Endothelial cell of umbilical vein (primary cell): ENCODE measurements at regions of chr1 and their contacts with region 1.

Region 1: DNA sequence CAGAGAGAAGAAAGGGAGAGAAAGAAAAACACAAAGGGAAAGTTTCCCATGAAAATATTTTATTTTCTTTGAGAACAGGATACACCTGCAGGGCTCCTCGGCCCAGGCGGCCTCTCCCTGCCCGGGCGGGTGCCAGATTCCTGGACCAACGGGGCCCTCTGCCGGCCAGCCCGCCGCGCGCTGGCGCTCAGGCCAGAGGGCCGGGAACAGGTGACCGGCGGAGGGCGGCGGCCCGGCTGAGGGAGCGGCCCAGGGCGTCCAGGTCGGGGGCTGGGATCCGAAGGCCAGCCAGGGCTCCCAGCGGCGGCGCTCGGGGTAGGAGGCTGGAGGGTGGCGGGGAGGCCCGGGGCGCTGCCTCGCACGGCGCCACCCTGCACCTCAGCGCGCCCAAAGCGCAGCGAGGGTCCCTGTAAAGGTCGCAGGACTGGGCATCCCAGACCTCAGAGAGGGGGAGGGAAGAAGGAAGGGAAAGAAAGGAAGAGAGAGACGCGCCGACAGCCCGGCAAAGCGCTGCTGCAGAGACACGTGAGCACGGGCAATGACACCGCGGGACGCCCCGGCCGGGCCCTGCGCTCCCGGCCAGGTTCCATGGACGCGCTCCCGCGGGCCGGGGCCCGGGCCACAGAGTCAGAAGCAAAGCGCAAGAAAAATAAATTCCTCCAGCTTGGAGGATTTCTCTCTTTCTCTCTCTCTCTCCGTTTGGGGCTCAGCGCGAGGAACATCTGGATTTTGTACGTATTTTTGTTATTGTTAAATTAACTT is 927 bp downstream of the WNT9A start:
- DNase-seq: no peak
- H3K4me3 ChIP-seq: peak overlapping the region in 2 of 3 experiments; percentile 44 to 63
- H3K27ac ChIP-seq: no peak overlapping the region
- H3K4me1 ChIP-seq: peaks cover 16% of the 10 kb centered on the region
- H3K27me3 ChIP-seq: peaks cover 3 to 5% of the 10 kb centered on the region in 2 experiments
- CTCF ChIP-seq: peak; percentile 68 to 73
- POLR2A ChIP-seq: no peak

Region 2: DNA sequence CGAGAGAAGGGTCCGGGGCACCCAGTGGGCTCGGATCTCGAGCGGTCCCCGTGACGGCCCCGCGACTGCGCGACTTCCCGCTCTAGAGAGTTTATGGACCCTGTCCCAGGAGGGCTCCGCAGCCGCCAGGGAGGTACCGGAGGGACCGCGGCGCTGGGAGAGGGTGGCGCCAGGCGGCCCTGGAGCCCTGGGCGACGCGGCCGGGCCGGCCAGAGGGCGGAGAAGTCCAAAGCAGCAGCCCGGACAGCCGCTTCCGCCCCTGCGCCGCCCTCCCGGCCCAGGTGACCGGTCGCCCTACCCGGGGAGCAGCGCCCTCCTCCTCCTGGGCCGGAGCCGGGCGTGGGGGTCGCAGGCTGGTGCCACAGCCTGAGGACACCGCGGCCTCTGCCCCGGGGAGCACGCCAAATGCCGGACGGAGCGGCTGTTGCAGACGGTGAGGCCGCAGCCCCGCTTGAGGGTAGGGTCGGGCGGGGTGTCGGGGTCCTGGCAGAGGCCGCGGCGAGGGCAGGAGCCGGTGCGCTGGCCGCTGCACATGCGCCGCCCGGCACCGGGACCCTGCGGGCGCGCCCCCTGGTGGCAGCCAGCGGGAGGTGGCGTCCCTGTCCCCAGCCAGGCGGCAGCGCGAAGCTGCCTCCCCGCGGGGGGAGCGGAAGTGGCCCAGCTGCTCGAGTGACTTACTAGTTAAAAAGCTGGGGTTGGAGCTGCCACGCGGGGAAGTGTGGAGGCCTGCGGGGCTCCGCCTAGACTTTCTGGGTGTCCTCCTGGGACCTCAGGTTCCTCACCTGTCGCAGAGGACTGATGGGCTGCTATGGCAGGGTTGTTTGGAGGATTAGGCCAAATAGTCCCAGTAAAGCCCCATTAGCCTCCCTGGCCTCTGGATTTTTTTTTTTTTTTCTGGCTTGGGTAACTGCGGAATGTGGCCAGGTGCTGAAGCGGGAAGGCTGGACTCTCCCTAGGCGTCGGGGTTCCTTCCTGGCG is 404.4 kb before region 1 on chr1:
- CTCF ChIA-PET with region 1: interaction called, 6 read pairs
- POLR2A ChIA-PET with region 1: no interaction called
- dilution Hi-C with region 1: no loop called
- intact Hi-C with region 1: loop called (anchors 1 kb)
- DNase-seq: peak; percentile 70
- H3K4me3 ChIP-seq: peak overlapping the region; percentile 2 to 64 (median 23)
- H3K27ac ChIP-seq: no peak overlapping the region
- H3K4me1 ChIP-seq: peaks cover 8% of the 10 kb centered on the region
- H3K27me3 ChIP-seq: no peaks in the 10 kb centered on the region
- CTCF ChIP-seq: peak; percentile 87 to 96
- POLR2A ChIP-seq: no peak

Region 3: GRCh38 chr1:227728059-227728891 is 218.5 kb before region 1 on chr1:
- CTCF ChIA-PET with region 1: interaction called, 8 read pairs
- POLR2A ChIA-PET with region 1: no interaction called
- dilution Hi-C with region 1: no loop called
- intact Hi-C with region 1: loop called (anchors 1 kb)
- DNase-seq: peak; percentile 44
- H3K4me3 ChIP-seq: peak overlapping the region in 1 of 3 experiments; percentile 30
- H3K27ac ChIP-seq: no peak overlapping the region
- H3K4me1 ChIP-seq: peaks cover 2% of the 10 kb centered on the region
- H3K27me3 ChIP-seq: peaks cover 0 to 10% of the 10 kb centered on the region in 2 experiments
- CTCF ChIP-seq: no peak
- POLR2A ChIP-seq: no peak

Region 4: GRCh38 chr1:227762233-227762911 is 184.4 kb before region 1 on chr1:
- CTCF ChIA-PET with region 1: interaction called, 16 read pairs
- POLR2A ChIA-PET with region 1: no interaction called
- dilution Hi-C with region 1: no loop called
- intact Hi-C with region 1: loop called (anchors 1 kb)
- DNase-seq: peak; percentile 76
- H3K4me3 ChIP-seq: no peak overlapping the region
- H3K27ac ChIP-seq: no peak overlapping the region
- H3K4me1 ChIP-seq: peaks cover 8% of the 10 kb centered on the region
- H3K27me3 ChIP-seq: no peaks in the 10 kb centered on the region
- CTCF ChIP-seq: peak; percentile 77 to 89
- POLR2A ChIP-seq: no peak

Region 5: GRCh38 chr1:227886993-227887696 is 59.7 kb before region 1 on chr1:
- CTCF ChIA-PET with region 1: no interaction called
- POLR2A ChIA-PET with region 1: no interaction called
- dilution Hi-C with region 1: no loop called
- intact Hi-C with region 1: loop called (anchors 5 kb)
- DNase-seq: peak; percentile 41
- H3K4me3 ChIP-seq: peak overlapping the region in 1 of 3 experiments; percentile 31
- H3K27ac ChIP-seq: no peak overlapping the region
- H3K4me1 ChIP-seq: no peaks in the 10 kb centered on the region
- H3K27me3 ChIP-seq: no peaks in the 10 kb centered on the region
- CTCF ChIP-seq: no peak
- POLR2A ChIP-seq: no peak

Region 6: DNA sequence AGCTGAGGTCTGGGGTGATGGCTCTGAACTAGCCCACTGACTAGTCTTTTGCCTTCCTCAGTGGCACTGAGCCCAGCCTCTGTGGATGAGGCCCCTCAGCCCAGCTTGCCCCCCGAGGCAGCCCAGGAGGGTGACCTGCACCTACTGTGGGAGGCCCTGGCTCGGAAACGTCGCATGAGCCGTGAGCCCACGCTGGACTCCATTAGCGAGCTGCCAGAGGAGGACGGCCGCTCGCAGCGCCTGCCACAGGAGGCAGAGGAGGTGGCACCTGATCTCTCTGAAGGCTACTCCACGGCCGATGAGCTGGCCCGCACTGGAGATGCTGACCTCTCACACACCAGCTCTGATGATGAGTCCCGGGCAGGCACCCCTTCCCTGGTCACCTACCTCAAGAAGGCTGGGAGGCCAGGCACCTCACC is 372.0 kb after region 1 on chr1:
- CTCF ChIA-PET with region 1: no interaction called
- POLR2A ChIA-PET with region 1: no interaction called
- dilution Hi-C with region 1: no loop called
- intact Hi-C with region 1: no loop called
- DNase-seq: no peak
- H3K4me3 ChIP-seq: no peak overlapping the region
- H3K27ac ChIP-seq: no peak overlapping the region
- H3K4me1 ChIP-seq: no peaks in the 10 kb centered on the region
- H3K27me3 ChIP-seq: no peaks in the 10 kb centered on the region
- CTCF ChIP-seq: no peak
- POLR2A ChIP-seq: no peak